ENCODE measurements at regions of chr6 and their contacts with region 1.

Region 1: DNA sequence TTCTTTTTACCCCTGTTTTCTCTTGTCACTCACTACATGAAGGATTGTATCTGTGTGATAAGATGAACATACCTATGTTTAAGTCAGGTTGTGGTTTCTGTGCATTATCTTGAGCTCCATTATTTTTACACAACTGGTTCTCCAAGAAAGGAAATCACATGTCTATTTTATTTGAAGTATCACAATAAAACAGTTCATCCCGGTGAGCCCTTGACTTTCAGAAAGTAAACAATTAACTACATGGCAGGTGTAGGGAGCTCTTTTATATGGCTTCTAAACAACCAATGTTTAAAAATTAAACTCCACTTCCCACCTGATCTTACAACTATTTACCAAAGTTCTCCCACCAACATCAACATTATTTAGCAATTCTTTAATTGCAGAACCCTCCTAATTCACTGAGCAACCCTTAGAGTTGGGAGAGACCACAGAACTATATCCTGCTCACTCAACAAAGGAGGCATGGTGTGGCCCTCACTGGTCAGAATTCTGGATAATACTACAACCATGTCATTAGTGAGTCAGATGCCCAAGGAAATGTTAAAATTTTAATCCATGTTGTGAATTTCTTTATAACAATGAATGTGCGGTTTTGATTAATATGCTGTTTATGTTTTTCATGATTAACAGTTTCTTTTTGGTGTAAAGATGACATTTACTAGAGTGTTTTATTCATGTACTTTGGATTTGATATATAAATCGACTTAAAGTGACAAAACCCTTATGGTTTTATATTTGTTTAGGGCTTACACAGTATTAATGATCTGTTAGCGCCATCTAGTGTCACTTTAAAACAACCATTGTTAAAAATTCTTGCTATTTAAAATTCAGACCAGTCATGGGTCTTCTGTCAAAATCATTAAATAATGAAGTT is 50.0 kb upstream of the SCGN start:
- DNase-seq: no peak
- ATAC-seq: no peak
- H3K4me3 ChIP-seq: no peak overlapping the region
- H3K27ac ChIP-seq: no peak overlapping the region
- H3K4me1 ChIP-seq: no peaks in the 10 kb centered on the region
- H3K27me3 ChIP-seq: no peaks in the 10 kb centered on the region
- CTCF ChIP-seq: peak; percentile 59

Region 2: DNA sequence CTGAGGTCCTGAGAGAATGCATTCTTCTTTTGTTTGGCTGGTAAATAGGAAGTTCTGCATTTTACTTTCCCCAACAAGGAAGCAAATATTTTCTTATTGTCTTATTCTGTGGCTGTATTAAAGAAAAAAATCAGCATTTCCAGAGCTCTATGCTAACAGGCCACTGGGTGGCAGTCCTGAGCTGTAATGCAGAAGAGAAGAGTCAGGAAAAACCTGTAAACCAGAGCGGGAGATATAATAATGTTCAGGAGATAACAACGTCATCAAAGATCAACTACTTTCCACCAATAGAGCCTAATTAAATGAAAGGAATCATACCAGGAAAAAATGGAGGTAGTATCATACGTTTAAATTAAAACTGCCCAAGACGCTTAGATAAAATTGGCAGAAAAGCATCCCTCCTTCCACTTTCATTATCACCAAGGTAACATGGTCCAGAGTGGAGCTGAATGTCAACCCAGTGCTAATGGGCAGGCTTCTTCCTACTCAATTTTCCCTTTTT is 378.5 kb before region 1 on chr6:
- intact Hi-C with region 1: loop called in 1 of 2 experiments (anchors 5 kb)
- DNase-seq: peak; percentile 63 to 68
- ATAC-seq: peak in 2 of 4 donors; percentile 55 to 56
- H3K4me3 ChIP-seq: peak overlapping the region; percentile 8
- H3K27ac ChIP-seq: no peak overlapping the region
- H3K4me1 ChIP-seq: no peaks in the 10 kb centered on the region
- H3K27me3 ChIP-seq: no peaks in the 10 kb centered on the region
- CTCF ChIP-seq: peak; percentile 84

Region 3: DNA sequence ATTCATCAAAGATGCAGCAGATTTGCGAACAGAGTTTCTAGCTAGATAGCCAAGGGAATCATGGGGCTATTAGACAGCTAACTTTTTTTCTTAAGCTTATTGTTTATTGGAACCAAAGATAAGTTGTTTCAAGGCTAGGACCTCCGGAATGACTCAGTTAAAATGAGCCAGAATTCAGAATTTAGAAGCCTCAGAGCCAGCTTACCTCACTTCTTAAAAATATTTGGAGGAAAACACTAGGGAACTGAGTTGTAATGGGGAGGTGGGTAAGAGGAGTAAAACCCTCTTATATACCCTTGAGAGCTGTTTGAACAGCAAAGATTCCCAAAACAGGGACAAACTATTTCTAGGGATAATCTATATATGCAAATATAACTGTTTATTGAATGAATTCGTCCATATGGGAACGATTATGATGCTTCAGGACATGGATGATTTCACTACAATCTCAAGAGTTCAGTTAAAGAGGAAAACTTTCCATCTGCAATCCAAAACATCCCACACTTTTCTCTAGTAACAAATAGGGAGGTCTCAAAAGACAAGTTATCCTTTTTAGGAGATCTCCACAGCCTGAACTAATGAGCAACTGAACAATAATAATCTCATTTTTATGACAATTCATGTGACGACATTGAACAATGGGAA is 335.5 kb before region 1 on chr6:
- intact Hi-C with region 1: loop called (anchors 5 kb)
- DNase-seq: no peak
- ATAC-seq: no peak
- H3K4me3 ChIP-seq: no peak overlapping the region
- H3K27ac ChIP-seq: no peak overlapping the region
- H3K4me1 ChIP-seq: no peaks in the 10 kb centered on the region
- H3K27me3 ChIP-seq: peaks cover 0 to 4% (median 0%) of the 10 kb centered on the region in 3 donors
- CTCF ChIP-seq: no peak

Measured in psoas muscle (tissue), 8 donors.